PC-9 (cell line): ENCODE measurements at regions of chr5 and their contacts with region 1.

Region 1: GRCh38 chr5:51960617-51961115 is 577.4 kb downstream of the ISL1 start:
- DNase-seq: no peak
- H3K4me3 ChIP-seq: no peak overlapping the region
- H3K27ac ChIP-seq: no peak overlapping the region
- H3K4me1 ChIP-seq: no peaks in the 10 kb centered on the region
- H3K27me3 ChIP-seq: no peaks in the 10 kb centered on the region
- CTCF ChIP-seq: peak; percentile 72

Region 2: GRCh38 chr5:51846015-51846414 is 114.7 kb before region 1 on chr5:
- CTCF ChIA-PET with region 1: no interaction called
- POLR2A ChIA-PET with region 1: no interaction called
- intact Hi-C with region 1: no loop called
- DNase-seq: no peak
- H3K4me3 ChIP-seq: no peak overlapping the region
- H3K27ac ChIP-seq: no peak overlapping the region
- H3K4me1 ChIP-seq: no peaks in the 10 kb centered on the region
- H3K27me3 ChIP-seq: no peaks in the 10 kb centered on the region
- CTCF ChIP-seq: no peak

Region 3: DNA sequence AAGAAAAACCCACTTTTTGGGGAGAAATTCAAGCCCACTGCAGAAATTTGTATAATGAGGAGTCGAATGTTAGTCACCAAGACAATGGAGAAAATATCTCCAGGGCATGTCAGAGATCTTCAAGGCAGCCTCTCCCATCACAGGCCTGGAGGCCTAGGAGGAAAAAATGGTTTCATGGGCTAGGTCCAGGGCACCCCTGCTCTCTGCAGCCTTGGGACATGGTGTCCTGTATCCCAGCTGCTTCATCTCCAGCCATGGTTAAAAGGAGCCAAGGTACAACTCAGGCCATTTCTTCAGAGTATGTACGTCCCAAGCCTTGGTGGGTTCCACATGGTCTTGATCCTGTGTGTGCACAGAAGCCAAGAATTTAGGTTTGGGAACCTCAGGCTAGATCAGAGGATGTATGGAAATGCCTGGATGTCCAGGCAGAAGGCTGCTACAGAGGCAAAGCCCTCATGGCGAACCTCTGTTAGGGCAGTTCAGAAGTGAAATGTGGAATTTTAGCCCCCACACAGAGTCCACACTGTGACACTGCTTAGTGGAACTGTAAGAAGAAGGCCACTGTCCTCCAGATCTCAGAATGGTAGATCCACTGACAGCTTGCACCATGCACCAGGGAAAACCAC is 16.1 kb before region 1 on chr5:
- CTCF ChIA-PET with region 1: no interaction called
- POLR2A ChIA-PET with region 1: no interaction called
- intact Hi-C with region 1: no loop called
- DNase-seq: no peak
- H3K4me3 ChIP-seq: no peak overlapping the region
- H3K27ac ChIP-seq: no peak overlapping the region
- H3K4me1 ChIP-seq: no peaks in the 10 kb centered on the region
- H3K27me3 ChIP-seq: no peaks in the 10 kb centered on the region
- CTCF ChIP-seq: no peak

Region 4: GRCh38 chr5:52007230-52007858 is 46.7 kb after region 1 on chr5:
- CTCF ChIA-PET with region 1: no interaction called
- POLR2A ChIA-PET with region 1: no interaction called
- intact Hi-C with region 1: loop called (anchors 2 kb)
- DNase-seq: peak in 1 of 2 experiments; percentile 20
- H3K4me3 ChIP-seq: no peak overlapping the region
- H3K27ac ChIP-seq: no peak overlapping the region
- H3K4me1 ChIP-seq: no peaks in the 10 kb centered on the region
- H3K27me3 ChIP-seq: no peaks in the 10 kb centered on the region
- CTCF ChIP-seq: peak; percentile 76

Region 5: GRCh38 chr5:52065182-52065581 is 104.5 kb after region 1 on chr5:
- CTCF ChIA-PET with region 1: no interaction called
- POLR2A ChIA-PET with region 1: no interaction called
- intact Hi-C with region 1: no loop called
- DNase-seq: no peak
- H3K4me3 ChIP-seq: no peak overlapping the region
- H3K27ac ChIP-seq: no peak overlapping the region
- H3K4me1 ChIP-seq: no peaks in the 10 kb centered on the region
- H3K27me3 ChIP-seq: no peaks in the 10 kb centered on the region
- CTCF ChIP-seq: no peak

Region 6: DNA sequence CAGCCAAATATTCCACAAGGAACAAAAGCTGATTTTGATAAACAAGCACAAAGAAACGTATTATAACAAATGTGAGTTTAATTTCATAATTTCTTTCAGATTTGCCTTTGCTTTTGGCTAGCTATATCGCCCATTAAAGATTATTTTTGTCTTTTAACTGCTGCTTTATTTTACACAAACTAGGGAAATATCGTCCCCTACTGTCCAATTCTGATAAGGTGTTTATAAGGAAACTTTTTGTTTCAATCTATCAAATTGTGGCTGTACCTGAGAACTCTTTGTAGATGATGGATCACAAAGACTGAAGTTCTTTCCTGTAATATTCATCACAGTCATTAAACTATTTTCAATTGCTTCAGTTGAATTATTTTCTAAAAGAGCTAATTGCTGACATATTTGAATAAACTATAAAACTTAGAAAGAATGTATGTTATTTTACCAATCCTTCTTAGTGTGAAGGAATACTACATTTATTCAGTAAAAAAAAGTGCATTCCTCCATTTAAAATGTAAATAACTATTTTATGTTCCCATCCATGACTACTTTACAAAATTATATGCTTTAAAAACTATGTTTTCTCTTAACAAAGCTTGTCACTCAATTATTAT is 395.7 kb after region 1 on chr5:
- CTCF ChIA-PET with region 1: no interaction called
- POLR2A ChIA-PET with region 1: no interaction called
- intact Hi-C with region 1: loop called (anchors 10 kb)
- DNase-seq: no peak
- H3K4me3 ChIP-seq: no peak overlapping the region
- H3K27ac ChIP-seq: no peak overlapping the region
- H3K4me1 ChIP-seq: no peaks in the 10 kb centered on the region
- H3K27me3 ChIP-seq: no peaks in the 10 kb centered on the region
- CTCF ChIP-seq: peak; percentile 81